HepG2 (cell line): ENCODE measurements at regions of chr21 and their contacts with region 1.

Region 1: GRCh38 chr21:36141513-36141925 is 6.6 kb downstream of the CBR3 start:
- DNase-seq: peak; percentile 94
- ATAC-seq: peak; percentile 99
- H3K4me3 ChIP-seq: 0 out of 6 replicates have a peak overlapping the region, but pooled peaks of 1 of the 3 experiments have one; percentile 8
- H3K27ac ChIP-seq: no peak overlapping the region
- H3K4me1 ChIP-seq: peaks cover 13% of the 10 kb centered on the region
- H3K27me3 ChIP-seq: peaks cover 0 to 6% of the 10 kb centered on the region in 2 experiments; a peak in 2 of 5 replicates
- CTCF ChIP-seq: peak; percentile 97
- EP300 ChIP-seq: no peak
- POLR2A ChIP-seq: no peak
- RAD21 ChIP-seq: peak; percentile 91

Region 2: GRCh38 chr21:36209626-36210171 is 68.2 kb after region 1 on chr21:
- CTCF ChIA-PET with region 1: interaction called, 27 read pairs
- POLR2A ChIA-PET with region 1: no interaction called
- in situ Hi-C with region 1: no loop called
- intact Hi-C with region 1: loop called (anchors 1 kb)
- DNase-seq: peak; percentile 71
- ATAC-seq: peak; percentile 70
- H3K4me3 ChIP-seq: no peak overlapping the region
- H3K27ac ChIP-seq: no peak overlapping the region
- H3K4me1 ChIP-seq: peaks cover 7% of the 10 kb centered on the region; the same call in 1 of the 2 replicates
- H3K27me3 ChIP-seq: no peaks in the 10 kb centered on the region
- CTCF ChIP-seq: peak; percentile 82
- EP300 ChIP-seq: no peak
- POLR2A ChIP-seq: no peak
- RAD21 ChIP-seq: peak; percentile 73

Region 3: DNA sequence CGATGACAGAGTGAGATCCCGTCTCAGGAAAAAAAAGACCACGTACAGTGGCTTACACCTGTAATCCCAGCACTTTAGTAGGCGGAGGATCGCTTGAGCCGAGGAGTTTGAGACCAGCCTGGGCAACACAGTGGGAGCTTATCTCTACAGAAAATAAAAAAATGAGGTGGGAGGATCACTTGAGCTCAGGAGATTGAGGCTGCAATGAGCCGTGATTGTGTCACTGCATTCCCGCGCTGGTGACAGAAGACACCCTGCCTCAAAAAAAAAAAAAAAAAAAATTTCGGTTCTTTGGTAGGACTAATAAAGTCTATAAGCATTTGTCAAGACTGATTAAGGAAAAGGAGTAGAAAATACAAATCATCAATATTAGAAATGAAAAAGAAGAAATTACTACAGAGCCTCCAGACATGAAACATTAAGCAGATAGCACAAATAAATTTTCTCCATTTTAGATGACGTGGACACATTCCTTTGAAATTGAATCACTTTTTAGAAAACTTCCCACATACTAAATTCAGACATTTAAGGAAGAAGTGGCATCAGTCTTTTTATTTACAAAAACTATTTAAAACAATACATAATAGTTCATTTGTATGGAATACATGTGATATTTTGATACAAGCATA is 208.9 kb after region 1 on chr21:
- CTCF ChIA-PET with region 1: no interaction called
- POLR2A ChIA-PET with region 1: no interaction called
- in situ Hi-C with region 1: no loop called
- intact Hi-C with region 1: no loop called
- DNase-seq: no peak
- ATAC-seq: no peak
- H3K4me3 ChIP-seq: no peak overlapping the region
- H3K27ac ChIP-seq: no peak overlapping the region
- H3K4me1 ChIP-seq: 0 out of 2 replicates have a peak, but pooled peaks cover 7% of the 10 kb centered on the region
- H3K27me3 ChIP-seq: no peaks in the 10 kb centered on the region; a peak in 1 of 5 replicates
- CTCF ChIP-seq: no peak
- EP300 ChIP-seq: no peak
- POLR2A ChIP-seq: no peak
- RAD21 ChIP-seq: no peak